ENCODE measurements at regions of chr22 and their contacts with region 1.

Region 1: GRCh38 chr22:17501679-17502285 is 61.5 kb upstream of the SLC25A18 start:
- DNase-seq: peak; percentile 4
- H3K4me3 ChIP-seq: no peak overlapping the region
- H3K27me3 ChIP-seq: no peaks in the 10 kb centered on the region
- CTCF ChIP-seq: peak; percentile 57

Region 2: GRCh38 chr22:16917144-16918003 is 584.4 kb before region 1 on chr22:
- CTCF ChIA-PET with region 1: interaction called, 11 read pairs
- POLR2A ChIA-PET with region 1: interaction called, 4 read pairs
- DNase-seq: no peak
- H3K4me3 ChIP-seq: no peak overlapping the region
- H3K27me3 ChIP-seq: no peaks in the 10 kb centered on the region
- CTCF ChIP-seq: peak; percentile 52

Region 3: GRCh38 chr22:17077255-17077654 is 424.5 kb before region 1 on chr22:
- CTCF ChIA-PET with region 1: interaction called, 71 read pairs
- POLR2A ChIA-PET with region 1: interaction called, 7 read pairs
- DNase-seq: peak; percentile 58
- H3K4me3 ChIP-seq: no peak overlapping the region
- H3K27me3 ChIP-seq: no peaks in the 10 kb centered on the region
- CTCF ChIP-seq: no peak

Region 4: GRCh38 chr22:17491090-17491640 is 10.6 kb before region 1 on chr22:
- CTCF ChIA-PET with region 1: interaction called, 13 read pairs
- POLR2A ChIA-PET with region 1: no interaction called
- DNase-seq: no peak
- H3K4me3 ChIP-seq: no peak overlapping the region
- H3K27me3 ChIP-seq: no peaks in the 10 kb centered on the region
- CTCF ChIP-seq: no peak

Region 5: GRCh38 chr22:17548010-17548755 is 46.4 kb after region 1 on chr22:
- CTCF ChIA-PET with region 1: no interaction called
- POLR2A ChIA-PET with region 1: no interaction called
- DNase-seq: no peak
- H3K4me3 ChIP-seq: no peak overlapping the region
- H3K27me3 ChIP-seq: no peaks in the 10 kb centered on the region
- CTCF ChIP-seq: no peak

Measured in BJ (cell line).